ENCODE measurements at regions of chr16 and their contacts with region 1.

Region 1: DNA sequence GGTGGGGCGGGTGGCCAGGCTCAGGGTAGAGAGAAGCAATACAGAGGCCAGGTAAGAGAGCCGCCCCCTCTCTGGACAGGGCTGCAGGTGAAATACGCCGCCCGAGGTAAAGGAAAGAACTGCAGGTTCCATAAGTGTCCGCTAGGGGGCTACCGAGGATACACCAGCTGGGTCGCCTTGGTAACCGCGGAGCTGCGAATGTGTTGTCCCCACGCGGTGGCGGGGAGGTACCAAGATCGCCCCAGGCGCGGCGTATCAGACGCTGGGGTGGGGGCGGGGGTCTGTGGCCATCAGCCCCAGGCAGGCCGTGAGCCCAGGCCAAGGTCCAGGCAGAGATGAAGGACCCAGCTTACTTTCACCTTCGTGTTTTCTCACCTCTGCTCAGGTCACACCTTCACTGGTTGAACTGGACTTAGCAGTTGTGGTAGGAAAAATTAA is 18.4 kb upstream of the ZFP90 start:
- DNase-seq: peak; percentile 96
- CTCF ChIP-seq: peak; percentile 91

Region 2: GRCh38 chr16:68445458-68445857 is 75.2 kb before region 1 on chr16:
- CTCF ChIA-PET with region 1: interaction called, 38 read pairs
- POLR2A ChIA-PET with region 1: no interaction called
- DNase-seq: peak; percentile 63
- CTCF ChIP-seq: peak; percentile 60

Region 3: DNA sequence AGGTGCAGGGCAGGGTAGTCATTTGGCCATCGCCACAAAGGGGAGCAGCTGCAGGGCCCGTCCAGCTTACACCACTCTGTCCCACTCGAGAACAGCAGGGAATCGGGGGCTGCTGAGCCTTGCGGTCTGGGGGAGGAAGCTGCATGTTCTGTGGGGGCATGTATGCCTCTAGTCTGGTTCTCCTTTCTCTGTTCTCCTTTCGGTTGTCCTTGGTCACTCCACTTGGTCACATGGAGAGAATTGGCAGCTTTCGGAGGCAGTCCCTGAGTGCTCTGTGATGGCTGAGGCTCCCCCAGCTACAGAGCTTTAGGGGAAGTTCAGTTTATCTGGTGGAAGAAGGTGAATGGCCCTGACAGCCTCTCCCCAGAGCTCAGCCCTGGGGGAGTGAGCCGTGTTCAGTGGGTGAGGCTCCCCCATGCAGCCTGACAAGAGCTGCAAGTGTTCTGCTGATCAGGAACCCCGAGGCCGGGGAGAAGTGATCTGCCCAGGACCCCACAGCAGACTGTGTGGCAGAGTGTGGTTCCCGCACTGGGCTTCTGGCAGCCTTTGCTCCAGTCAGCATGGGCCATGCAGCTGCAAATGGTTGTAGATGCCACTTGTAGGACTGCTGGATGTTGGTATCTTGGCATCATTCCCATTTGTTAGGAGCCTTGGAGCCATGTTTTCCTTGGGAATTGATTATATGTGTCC is 50.1 kb before region 1 on chr16:
- CTCF ChIA-PET with region 1: interaction called, 15 read pairs
- POLR2A ChIA-PET with region 1: no interaction called
- DNase-seq: peak; percentile 82
- CTCF ChIP-seq: no peak

Region 4: GRCh38 chr16:68478526-68479250 is 42.0 kb before region 1 on chr16:
- CTCF ChIA-PET with region 1: interaction called, 15 read pairs
- POLR2A ChIA-PET with region 1: no interaction called
- DNase-seq: no peak
- CTCF ChIP-seq: no peak

Region 5: GRCh38 chr16:68486502-68487202 is 34.0 kb before region 1 on chr16:
- CTCF ChIA-PET with region 1: interaction called, 11 read pairs
- POLR2A ChIA-PET with region 1: no interaction called
- DNase-seq: no peak
- CTCF ChIP-seq: no peak

Region 6: DNA sequence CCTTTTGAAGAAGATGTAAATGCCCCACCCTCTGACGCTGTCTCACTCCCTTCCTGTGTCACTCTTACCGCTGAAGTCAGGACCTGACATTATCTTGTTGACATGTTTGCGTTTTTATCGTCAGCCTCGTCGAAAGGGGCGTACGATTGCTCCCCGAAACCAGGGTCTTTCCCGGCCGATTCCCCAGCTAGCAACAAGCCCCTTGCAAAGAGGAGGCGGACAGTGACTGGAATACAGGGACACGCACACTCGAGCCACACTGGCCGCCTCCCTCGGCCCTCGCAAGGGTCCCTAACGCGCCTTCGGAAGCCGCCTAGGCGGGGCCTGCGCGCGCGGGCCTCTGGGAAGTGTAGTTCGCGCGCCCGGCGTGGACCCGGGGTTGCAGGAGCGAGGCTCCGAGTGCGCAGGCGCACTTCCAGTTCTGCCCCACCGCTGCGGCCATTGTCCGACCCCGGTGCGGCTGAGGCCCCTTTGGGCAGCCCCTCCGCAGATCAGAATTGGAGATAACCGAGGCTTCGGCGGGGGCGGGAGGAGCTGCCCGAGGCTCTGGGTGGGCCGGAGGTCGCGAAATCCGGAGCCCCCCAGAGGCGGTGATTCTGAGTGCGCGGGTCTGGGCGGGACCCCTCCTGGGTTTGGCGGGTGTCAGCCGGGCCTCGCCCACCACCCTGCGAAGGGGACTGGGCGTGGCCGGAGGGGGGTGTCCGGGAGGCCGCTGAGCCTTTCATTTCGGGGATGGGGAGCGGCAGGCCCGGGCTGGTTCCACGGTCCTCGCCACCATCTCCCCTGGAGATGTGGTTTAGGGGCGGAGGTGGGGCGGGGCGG is 18.4 kb after region 1 on chr16 and contains the start of gene ZFP90:
- CTCF ChIA-PET with region 1: interaction called, 44 read pairs
- POLR2A ChIA-PET with region 1: no interaction called
- DNase-seq: peak; percentile 98
- CTCF ChIP-seq: no peak

Region 7: DNA sequence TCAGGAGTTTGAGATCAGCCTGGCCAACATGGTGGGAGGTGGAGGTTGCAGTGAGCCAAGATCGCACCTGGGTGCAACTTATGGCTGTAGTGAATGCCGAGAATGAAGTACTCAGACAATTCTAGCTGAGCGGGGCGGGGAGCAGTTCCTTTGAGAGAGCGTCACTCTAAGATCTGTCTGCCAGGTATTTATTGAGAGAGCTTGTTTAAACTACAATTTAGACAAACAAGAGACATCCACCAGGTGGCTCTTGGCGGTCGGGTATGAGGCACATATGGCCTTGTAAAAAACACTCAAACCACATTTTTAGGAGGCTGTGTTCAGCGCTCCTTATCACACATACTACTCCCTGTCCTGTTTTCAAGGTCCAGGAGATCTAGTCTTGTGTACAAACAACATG is 175.8 kb after region 1 on chr16:
- CTCF ChIA-PET with region 1: no interaction called
- POLR2A ChIA-PET with region 1: no interaction called
- DNase-seq: no peak
- CTCF ChIP-seq: no peak

Region 8: GRCh38 chr16:69123910-69124309 is 603.2 kb after region 1 on chr16:
- CTCF ChIA-PET with region 1: interaction called, 11 read pairs
- POLR2A ChIA-PET with region 1: no interaction called
- DNase-seq: peak; percentile 68
- CTCF ChIP-seq: peak; percentile 67